Activated CD4-positive, alpha-beta memory T cell treated with anti-CD3 and anti-CD28 coated beads, Interleukin-2, amount 10 ng/mL, durations not matched to agents 7 days and 5 days (primary cell): ENCODE measurements at regions of chr1 and their contacts with region 1.

Region 1: GRCh38 chr1:43073490-43074230 is 98.4 kb downstream of the EBNA1BP2 start:
- DNase-seq: peak; percentile 80
- H3K4me3 Mint-ChIP-seq: no peak overlapping the region
- H3K27ac Mint-ChIP-seq: no peak overlapping the region
- H3K4me1 Mint-ChIP-seq: peaks cover 6% of the 10 kb centered on the region
- H3K27me3 Mint-ChIP-seq: no peaks in the 10 kb centered on the region

Region 2: DNA sequence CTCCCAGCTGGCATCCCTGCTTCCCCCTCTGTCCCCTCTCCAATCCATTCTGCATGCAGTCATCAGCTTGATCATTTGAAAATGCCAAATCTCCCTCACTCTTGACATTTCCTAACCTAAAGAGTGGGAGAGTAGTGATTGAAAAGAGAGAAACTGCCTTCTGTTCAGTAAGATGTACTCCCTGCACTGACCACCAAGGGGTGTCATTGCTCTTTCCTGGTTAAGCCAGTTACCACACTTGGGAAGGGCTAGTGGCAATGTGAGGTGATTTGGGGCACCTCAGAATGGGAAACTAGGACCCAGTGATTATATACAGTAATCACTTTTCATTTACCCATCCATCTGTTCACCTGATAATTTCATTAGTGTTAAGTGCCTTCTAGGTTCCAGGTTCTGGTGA is 295.8 kb before region 1 on chr1:
- CTCF ChIA-PET with region 1: interaction called, 65 read pairs
- POLR2A ChIA-PET with region 1: interaction called, 4 read pairs
- DNase-seq: peak; percentile 36
- H3K4me3 Mint-ChIP-seq: no peak overlapping the region
- H3K27ac Mint-ChIP-seq: no peak overlapping the region
- H3K4me1 Mint-ChIP-seq: peaks cover 37% of the 10 kb centered on the region
- H3K27me3 Mint-ChIP-seq: no peaks in the 10 kb centered on the region

Region 3: GRCh38 chr1:42904434-42904833 is 169.2 kb before region 1 on chr1:
- CTCF ChIA-PET with region 1: interaction called, 11 read pairs
- POLR2A ChIA-PET with region 1: interaction called, 4 read pairs
- DNase-seq: no peak
- H3K4me3 Mint-ChIP-seq: no peak overlapping the region
- H3K27ac Mint-ChIP-seq: no peak overlapping the region
- H3K4me1 Mint-ChIP-seq: no peaks in the 10 kb centered on the region
- H3K27me3 Mint-ChIP-seq: peaks cover 1% of the 10 kb centered on the region

Region 4: DNA sequence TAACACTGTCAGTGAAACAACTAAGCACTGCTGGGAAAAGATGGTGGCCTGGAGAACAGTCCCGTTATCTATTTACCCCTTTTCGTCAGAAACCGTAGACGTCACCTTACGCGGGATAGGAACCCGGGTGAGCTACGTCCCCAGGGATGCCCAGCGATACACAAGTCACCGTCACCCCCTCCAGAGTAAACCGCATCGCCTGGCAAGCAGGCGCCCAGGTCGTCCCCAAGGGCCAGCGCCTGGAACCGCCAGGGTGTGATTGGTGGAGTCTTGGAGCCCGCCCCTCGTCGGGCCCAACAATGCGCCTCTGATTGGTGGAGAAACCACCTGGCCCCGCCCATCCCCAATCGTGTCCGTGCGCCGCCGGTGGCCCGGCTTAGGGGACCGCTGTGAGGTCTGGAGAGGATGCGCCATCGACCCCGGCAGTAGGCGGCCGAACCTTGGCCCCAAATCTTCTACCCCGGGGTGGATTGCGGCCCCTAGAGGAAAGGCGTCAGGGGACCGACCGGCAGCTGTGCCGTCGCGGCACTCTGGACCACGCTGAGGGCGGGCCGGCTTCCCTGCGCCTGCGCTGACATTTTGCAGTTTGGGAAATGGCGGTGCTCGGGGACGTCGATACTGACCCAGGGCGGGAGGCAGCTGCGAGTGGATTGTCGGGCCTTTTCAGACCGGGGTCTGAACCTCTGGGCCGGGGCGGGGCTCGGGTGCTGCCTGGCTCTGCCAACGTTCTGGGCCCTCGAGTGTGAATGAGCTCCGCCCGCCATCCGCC is 149.4 kb before region 1 on chr1:
- CTCF ChIA-PET with region 1: interaction called, 380 read pairs
- POLR2A ChIA-PET with region 1: interaction called, 35 read pairs
- DNase-seq: peak; percentile 93
- H3K4me3 Mint-ChIP-seq: peak overlapping the region; percentile 73
- H3K27ac Mint-ChIP-seq: peak overlapping the region; percentile 84
- H3K4me1 Mint-ChIP-seq: peaks cover 60% of the 10 kb centered on the region
- H3K27me3 Mint-ChIP-seq: no peaks in the 10 kb centered on the region

Region 5: GRCh38 chr1:42936309-42937078 is 137.2 kb before region 1 on chr1:
- CTCF ChIA-PET with region 1: interaction called, 13 read pairs
- POLR2A ChIA-PET with region 1: interaction called, 5 read pairs
- DNase-seq: peak; percentile 59
- H3K4me3 Mint-ChIP-seq: peak overlapping the region; percentile 52
- H3K27ac Mint-ChIP-seq: peak overlapping the region; percentile 94
- H3K4me1 Mint-ChIP-seq: peaks cover 99% of the 10 kb centered on the region
- H3K27me3 Mint-ChIP-seq: no peaks in the 10 kb centered on the region

Region 6: DNA sequence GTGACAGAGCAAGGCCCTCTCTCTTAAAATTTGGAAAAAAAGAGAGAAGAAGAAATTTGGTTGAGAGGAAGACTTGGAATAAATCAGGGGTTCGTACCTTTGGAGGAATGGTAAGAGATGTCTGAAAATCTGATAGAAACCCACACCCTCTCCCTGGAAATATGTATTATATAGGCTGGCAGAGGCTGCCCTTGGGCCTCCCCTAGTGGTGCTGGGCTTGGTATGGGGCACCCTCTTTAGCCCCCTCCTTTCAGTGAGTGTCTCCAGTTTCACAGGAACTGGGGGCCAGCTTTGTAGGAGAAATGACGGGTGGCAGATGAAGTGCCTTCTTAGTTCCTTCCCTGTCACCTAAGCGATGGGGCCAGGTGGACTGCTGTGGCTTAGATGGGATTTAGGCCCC is 32.1 kb before region 1 on chr1:
- CTCF ChIA-PET with region 1: no interaction called
- POLR2A ChIA-PET with region 1: no interaction called
- DNase-seq: no peak
- H3K4me3 Mint-ChIP-seq: no peak overlapping the region
- H3K27ac Mint-ChIP-seq: no peak overlapping the region
- H3K4me1 Mint-ChIP-seq: peaks cover 9% of the 10 kb centered on the region
- H3K27me3 Mint-ChIP-seq: peaks cover 2% of the 10 kb centered on the region